H1 (cell line): ENCODE measurements at regions of chr17 and their contacts with region 1.

Region 1: DNA sequence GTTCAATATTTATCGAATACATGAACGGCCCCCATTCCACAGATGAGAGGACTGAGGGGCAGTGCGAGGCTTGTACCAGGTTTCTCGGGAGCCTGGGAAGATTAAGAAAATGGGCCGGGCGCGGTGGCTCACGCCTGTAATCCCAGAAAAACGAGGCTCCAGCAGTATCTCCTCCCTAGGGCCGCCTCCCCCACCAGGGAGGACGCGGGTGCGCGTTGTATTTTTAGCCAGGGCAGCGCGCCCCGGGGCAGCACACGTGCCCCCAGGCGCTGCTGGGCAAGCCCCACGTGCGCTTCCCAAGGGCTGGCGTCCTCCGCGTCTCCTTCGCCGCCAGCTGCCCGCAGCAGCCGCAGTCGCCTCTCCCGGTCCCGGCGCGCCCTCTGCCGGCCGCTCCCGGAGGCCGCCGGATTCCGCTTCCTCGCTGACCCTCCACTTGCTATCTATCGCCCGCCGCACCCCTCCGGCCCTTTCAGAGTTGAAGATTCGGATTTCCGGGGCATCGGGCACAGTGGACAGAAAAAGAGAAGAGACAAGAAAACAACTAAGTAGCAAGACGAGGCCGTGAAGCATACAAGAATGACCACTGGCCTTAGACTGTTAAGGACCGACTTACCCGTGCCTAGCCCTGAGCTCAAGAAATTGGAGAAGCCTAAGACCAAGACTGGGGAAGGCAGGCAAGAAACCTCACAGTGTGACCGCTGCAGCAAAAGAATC is 1.9 kb upstream of the YBX2 start:
- DNase-seq: peak in 1 of 2 experiments; percentile 96
- H3K4me3 ChIP-seq: peak overlapping the region in 1 of 4 experiments; percentile 51; a peak in 2 of 8 replicates
- H3K27ac ChIP-seq: no peak overlapping the region
- H3K4me1 ChIP-seq: peaks cover 0 to 14% (median 5%) of the 10 kb centered on the region in 4 experiments; a peak in 5 of 7 replicates
- H3K27me3 ChIP-seq: peaks cover 3 to 11% (median 9%) of the 10 kb centered on the region in 4 experiments
- CTCF ChIP-seq: peak; percentile 84 to 96 (median 90)
- EP300 ChIP-seq: peak in 1 of 2 experiments; percentile 83; a peak in 2 of 3 replicates
- POLR2A ChIP-seq: no peak
- RAD21 ChIP-seq: peak; percentile 93 to 95

Region 2: GRCh38 chr17:7261172-7261927 is 35.0 kb before region 1 on chr17:
- CTCF ChIA-PET with region 1: interaction called, 17 read pairs
- POLR2A ChIA-PET with region 1: interaction called, 33 read pairs
- DNase-seq: peak in 1 of 2 experiments; percentile 86
- H3K4me3 ChIP-seq: peak overlapping the region; percentile 93 to 98 (median 96)
- H3K27ac ChIP-seq: peak overlapping the region; percentile 91
- H3K4me1 ChIP-seq: peaks cover 4 to 15% (median 6%) of the 10 kb centered on the region in 4 experiments; a peak in 6 of 7 replicates
- H3K27me3 ChIP-seq: no peaks in the 10 kb centered on the region
- CTCF ChIP-seq: no peak
- EP300 ChIP-seq: peak in 1 of 2 experiments; percentile 96; a peak in 2 of 3 replicates
- POLR2A ChIP-seq: peak; percentile 72 to 91
- RAD21 ChIP-seq: no peak

Region 3: GRCh38 chr17:7266784-7267183 is 29.6 kb before region 1 on chr17:
- CTCF ChIA-PET with region 1: interaction called, 17 read pairs
- POLR2A ChIA-PET with region 1: interaction called, 33 read pairs
- DNase-seq: no peak
- H3K4me3 ChIP-seq: no peak overlapping the region
- H3K27ac ChIP-seq: no peak overlapping the region
- H3K4me1 ChIP-seq: peaks cover 0 to 8% (median 4%) of the 10 kb centered on the region in 4 experiments; a peak in 4 of 7 replicates
- H3K27me3 ChIP-seq: no peaks in the 10 kb centered on the region
- CTCF ChIP-seq: no peak
- EP300 ChIP-seq: no peak
- POLR2A ChIP-seq: no peak
- RAD21 ChIP-seq: no peak

Region 4: DNA sequence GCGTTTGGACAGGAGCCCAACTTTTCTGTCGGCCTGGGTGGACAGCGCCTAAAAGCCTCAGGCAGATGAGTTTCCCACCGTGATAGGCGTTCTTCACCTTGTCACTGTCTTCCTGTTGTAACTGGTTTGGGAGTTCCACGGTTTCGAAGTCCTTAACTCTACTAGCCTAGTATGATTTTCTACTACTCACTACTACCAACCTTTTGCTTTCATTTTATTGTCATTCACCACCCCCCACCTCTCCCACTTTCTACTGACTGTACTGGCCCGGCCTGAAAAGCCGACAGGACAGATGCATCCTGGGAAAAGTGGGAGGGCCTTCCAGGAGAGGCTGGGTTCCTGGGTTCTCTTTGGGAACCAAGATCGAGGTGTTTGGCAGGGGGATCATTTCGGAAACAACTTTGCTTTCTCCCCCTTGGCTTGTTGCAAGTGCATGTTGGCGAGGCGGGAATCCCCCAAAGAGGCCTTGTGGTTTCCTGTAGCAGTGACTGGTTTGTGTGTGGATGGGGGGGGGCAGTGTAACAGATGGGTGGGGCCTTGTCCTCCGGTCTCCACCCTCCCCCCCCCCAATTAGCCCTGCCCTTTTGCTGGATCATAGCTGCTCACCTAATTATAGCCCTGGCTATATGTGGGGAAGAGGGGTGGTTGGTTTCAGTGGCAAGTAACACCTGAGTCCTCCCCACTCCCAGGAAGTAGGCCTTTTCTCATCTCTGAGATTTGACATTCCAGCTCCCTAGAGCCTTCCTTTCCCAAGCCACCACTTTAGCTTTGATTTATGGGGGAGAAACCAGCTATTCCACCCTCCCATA is 12.5 kb after region 1 on chr17:
- CTCF ChIA-PET with region 1: interaction called, 22 read pairs
- POLR2A ChIA-PET with region 1: interaction called, 45 read pairs
- DNase-seq: peak in 1 of 2 experiments; percentile 75
- H3K4me3 ChIP-seq: peak overlapping the region; percentile 87 to 97 (median 90)
- H3K27ac ChIP-seq: peak overlapping the region; percentile 92
- H3K4me1 ChIP-seq: peaks cover 0 to 14% (median 6%) of the 10 kb centered on the region in 4 experiments; a peak in 5 of 7 replicates
- H3K27me3 ChIP-seq: no peaks in the 10 kb centered on the region
- CTCF ChIP-seq: no peak
- EP300 ChIP-seq: no peak
- POLR2A ChIP-seq: peak; percentile 50 to 66
- RAD21 ChIP-seq: no peak